ENCODE measurements at regions of chr20 and their contacts with region 1.

Region 1: GRCh38 chr20:40962730-40963504 is 65.7 kb upstream of the TOP1 start:
- H3K4me3 Mint-ChIP-seq: no peak overlapping the region
- H3K27ac Mint-ChIP-seq: no peak overlapping the region
- H3K4me1 Mint-ChIP-seq: peaks cover 14% of the 10 kb centered on the region
- H3K27me3 Mint-ChIP-seq: peaks cover 3% of the 10 kb centered on the region

Region 2: DNA sequence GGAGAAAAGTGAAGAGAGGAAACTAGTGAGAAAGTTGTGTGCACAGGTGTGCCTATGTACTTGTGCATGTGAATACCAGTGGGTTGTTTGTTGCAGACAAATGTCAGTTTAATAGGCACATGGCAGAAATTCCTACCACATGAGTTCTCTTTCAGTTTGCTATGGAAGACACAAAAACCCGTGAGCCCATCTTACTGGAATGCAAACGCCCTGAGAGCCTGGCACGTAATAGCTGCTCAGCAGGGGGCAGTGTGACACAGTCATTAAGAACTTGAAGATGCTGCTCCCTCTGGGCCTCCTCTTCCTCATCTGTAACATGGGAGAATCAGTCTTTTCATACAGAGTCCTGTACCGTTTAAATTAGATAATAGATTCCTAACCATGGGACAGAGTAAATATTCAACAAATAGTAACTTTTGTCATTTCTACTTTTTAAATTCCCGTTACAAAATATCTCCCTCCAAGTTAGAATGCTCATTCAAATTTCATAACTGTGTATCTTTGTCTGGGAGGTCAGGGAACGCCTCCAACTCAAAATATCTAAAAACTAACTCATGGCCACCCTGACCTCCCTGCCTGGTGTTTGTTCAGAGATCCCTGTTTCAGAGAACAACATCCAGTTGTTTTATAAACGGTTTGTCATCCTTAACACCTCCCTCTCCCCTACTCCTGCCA is 1076.8 kb before region 1 on chr20:
- intact Hi-C with region 1: loop called (anchors 5 kb)
- H3K4me3 Mint-ChIP-seq: peak overlapping the region; percentile 44
- H3K27ac Mint-ChIP-seq: peak overlapping the region; percentile 81
- H3K4me1 Mint-ChIP-seq: peaks cover 27% of the 10 kb centered on the region
- H3K27me3 Mint-ChIP-seq: peaks cover 9% of the 10 kb centered on the region

Region 3: GRCh38 chr20:40617594-40617993 is 345.3 kb before region 1 on chr20:
- intact Hi-C with region 1: no loop called
- H3K4me3 Mint-ChIP-seq: no peak overlapping the region
- H3K27ac Mint-ChIP-seq: no peak overlapping the region
- H3K4me1 Mint-ChIP-seq: no peaks in the 10 kb centered on the region
- H3K27me3 Mint-ChIP-seq: peaks cover 40% of the 10 kb centered on the region

Region 4: GRCh38 chr20:40741507-40742106 is 221.3 kb before region 1 on chr20:
- intact Hi-C with region 1: loop called (anchors 2 kb)
- H3K4me3 Mint-ChIP-seq: no peak overlapping the region
- H3K27ac Mint-ChIP-seq: peak overlapping the region; percentile 17
- H3K4me1 Mint-ChIP-seq: peaks cover 29% of the 10 kb centered on the region
- H3K27me3 Mint-ChIP-seq: peaks cover 2% of the 10 kb centered on the region

Region 5: DNA sequence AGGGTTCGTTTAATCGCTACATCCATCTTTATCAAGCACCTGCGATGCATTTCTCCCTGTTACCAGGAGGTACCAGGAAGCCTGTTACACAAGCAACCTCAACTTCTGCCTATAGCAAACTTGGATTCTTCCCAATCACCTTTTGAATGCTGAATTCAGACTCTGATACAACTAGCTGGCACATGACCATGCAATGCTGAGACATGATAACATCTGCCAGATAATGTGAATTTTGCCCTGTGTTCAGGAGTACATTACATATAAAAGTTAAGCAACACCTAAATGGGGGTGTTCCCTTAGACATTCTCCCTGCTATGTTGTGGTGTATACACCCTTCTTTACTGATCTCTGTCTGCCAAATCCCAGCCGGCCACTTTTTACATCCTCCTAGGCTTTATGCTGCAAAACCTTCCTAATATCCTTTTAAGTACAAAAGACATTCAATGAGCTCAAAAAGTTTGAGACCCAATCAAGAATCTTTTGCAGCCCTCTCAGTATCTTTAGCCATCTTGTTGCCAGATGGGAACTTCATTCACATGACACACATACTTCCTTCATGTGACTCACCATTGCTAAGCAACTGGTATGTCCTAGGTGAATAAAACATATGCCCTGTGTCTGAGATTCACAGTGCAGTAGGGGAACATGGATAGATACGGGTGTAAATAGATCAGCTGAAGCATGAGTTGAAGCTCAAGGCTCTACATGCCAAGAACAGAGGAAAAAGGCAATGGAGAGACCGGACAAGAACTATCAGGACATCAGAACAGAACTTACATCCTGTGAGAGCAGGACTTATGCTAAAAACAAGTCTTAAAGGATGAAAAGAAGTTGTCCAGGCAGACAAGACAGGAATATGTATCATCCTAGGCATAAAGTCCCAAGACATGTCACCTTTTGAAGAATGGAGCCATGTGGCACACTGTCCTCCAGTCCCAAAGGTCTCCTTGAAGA is 270.3 kb after region 1 on chr20:
- intact Hi-C with region 1: loop called (anchors 2 kb)
- H3K4me3 Mint-ChIP-seq: no peak overlapping the region
- H3K27ac Mint-ChIP-seq: peak overlapping the region; percentile 4
- H3K4me1 Mint-ChIP-seq: peaks cover 17% of the 10 kb centered on the region
- H3K27me3 Mint-ChIP-seq: no peaks in the 10 kb centered on the region

Region 6: DNA sequence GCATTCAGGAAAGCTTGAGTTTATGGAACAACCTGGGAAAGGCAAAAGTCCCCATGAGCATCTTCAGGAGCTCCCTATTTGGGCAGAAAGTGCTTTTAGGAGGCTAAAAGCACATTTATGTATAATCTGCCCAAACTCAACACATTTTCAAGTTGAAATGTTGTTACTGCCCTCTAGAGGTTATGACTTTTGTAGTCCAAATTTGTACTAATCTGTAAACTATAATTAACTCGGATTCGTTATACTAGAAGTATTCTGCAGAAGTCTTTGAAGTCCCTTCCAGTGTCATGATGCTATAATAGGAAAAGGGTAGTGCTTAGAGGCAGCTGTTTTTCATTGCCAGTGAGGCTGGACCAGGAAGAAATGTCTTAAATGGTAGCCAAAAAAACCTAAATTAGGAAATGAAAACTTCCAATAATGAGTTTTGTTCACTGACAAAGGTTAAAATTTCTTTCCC is 448.5 kb after region 1 on chr20:
- intact Hi-C with region 1: no loop called
- H3K4me3 Mint-ChIP-seq: no peak overlapping the region
- H3K27ac Mint-ChIP-seq: no peak overlapping the region
- H3K4me1 Mint-ChIP-seq: no peaks in the 10 kb centered on the region
- H3K27me3 Mint-ChIP-seq: no peaks in the 10 kb centered on the region